ENCODE measurements at regions of chr17 and their contacts with region 1.

Region 1: GRCh38 chr17:32519228-32520103 is 32.7 kb downstream of the CDK5R1 start:
- DNase-seq: peak; percentile 48
- ATAC-seq: peak; percentile 14
- H3K4me3 Mint-ChIP-seq: peak overlapping the region; percentile 87
- H3K27ac Mint-ChIP-seq: peak overlapping the region; percentile 86
- H3K4me1 Mint-ChIP-seq: peaks cover 89% of the 10 kb centered on the region
- H3K27me3 Mint-ChIP-seq: no peaks in the 10 kb centered on the region
- CTCF ChIP-seq: no peak

Region 2: DNA sequence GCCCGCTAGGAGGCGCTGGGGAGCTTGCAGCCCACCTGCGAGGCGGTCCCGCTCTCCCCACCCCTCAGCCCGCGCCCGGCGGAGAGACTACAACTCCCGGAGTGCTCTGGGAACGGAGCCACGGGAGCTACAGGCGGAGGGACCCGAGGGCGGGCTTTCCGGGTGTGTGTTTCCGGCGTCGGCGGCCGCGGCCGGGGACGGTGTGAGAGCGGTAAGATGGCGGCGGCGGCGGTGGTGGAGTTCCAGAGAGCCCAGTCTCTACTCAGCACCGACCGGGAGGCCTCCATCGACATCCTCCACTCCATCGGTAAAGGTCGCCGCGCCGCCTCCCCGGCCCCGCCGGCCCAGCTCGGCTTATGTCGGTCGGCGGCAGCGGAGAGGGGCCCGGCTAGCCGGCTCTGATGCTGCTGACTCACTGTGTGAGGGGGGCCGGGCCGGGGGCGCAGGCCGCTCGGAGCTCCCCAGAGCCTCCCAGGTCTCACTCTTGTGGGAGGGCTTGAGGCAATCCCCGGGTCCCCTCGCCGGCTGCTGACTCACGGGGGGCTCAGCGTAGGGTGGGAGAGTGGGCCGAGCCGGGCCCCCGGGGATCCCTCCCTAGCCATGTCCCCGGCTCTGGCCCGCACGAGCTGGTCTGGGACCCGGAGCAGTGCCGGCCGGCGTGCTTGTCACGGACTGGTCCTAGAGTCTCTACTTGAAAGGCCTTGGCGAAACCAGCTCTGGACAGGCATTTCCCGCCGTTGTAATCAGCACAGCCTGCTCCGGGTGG is 75.0 kb before region 1 on chr17 and contains the start of gene PSMD11:
- CTCF ChIA-PET with region 1: interaction called, 5 read pairs
- POLR2A ChIA-PET with region 1: interaction called, 10 read pairs
- intact Hi-C with region 1: loop called (anchors 2 kb)
- DNase-seq: peak; percentile 99
- ATAC-seq: peak; percentile 97
- H3K4me3 Mint-ChIP-seq: peak within 1 kb of the TSS; percentile 89
- H3K27ac Mint-ChIP-seq: peak within 1 kb of the TSS; percentile 65
- H3K4me1 Mint-ChIP-seq: peaks cover 28% of the 10 kb centered on the region
- H3K27me3 Mint-ChIP-seq: no peaks in the 10 kb centered on the region
- CTCF ChIP-seq: no peak
- total RNA-seq, gene PSMD11: 115 and 117 TPM in 2 replicates

Region 3: DNA sequence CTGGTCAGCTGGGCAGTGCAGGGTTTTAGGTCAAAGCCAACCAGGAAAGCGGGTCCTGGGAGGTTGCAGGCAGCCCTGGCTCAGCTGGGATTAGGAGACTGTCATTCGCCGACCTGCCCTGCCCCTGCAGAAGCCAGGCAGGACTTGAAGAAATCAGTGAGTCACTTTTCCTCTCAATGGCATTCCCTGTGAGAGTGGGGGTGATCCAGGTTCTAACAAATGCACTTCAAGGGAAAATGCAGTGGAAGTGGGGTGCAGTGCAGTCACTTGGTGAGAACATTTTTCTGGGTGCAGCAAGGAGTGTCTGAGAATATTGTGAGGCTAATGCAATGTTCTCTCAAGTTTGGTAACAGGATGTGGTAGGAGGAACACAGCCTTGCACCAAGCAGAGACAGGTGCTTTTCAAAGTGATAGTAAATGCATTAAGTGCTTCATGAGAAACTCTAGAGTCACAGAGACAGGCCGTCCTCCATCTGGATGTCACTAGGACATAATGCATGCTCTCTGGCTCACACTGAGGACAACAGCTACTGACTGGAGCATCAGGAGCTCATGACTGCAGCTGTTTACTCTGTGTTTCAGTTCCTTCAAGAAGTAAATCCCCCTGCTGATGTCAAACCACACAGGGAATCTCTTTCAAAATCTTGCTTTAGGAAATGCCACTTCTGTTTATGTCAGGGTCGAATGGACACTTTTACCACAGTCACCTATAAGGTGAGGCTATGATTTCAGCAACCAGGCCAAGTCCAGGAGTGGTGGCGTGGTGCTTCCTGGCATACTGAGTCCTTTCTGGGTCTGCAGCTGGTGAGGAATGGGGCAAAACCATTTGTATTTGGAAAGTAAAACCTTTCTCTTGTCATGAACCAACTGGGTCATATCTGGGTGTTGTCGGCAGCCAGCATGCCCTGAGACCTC is 16.0 kb before region 1 on chr17:
- CTCF ChIA-PET with region 1: interaction called, 4 read pairs
- POLR2A ChIA-PET with region 1: interaction called, 23 read pairs
- intact Hi-C with region 1: loop called (anchors 1 kb)
- DNase-seq: no peak
- ATAC-seq: peak; percentile 89
- H3K4me3 Mint-ChIP-seq: peak overlapping the region; percentile 68
- H3K27ac Mint-ChIP-seq: peak overlapping the region; percentile 92
- H3K4me1 Mint-ChIP-seq: peaks cover 53% of the 10 kb centered on the region
- H3K27me3 Mint-ChIP-seq: no peaks in the 10 kb centered on the region
- CTCF ChIP-seq: no peak

Region 4: DNA sequence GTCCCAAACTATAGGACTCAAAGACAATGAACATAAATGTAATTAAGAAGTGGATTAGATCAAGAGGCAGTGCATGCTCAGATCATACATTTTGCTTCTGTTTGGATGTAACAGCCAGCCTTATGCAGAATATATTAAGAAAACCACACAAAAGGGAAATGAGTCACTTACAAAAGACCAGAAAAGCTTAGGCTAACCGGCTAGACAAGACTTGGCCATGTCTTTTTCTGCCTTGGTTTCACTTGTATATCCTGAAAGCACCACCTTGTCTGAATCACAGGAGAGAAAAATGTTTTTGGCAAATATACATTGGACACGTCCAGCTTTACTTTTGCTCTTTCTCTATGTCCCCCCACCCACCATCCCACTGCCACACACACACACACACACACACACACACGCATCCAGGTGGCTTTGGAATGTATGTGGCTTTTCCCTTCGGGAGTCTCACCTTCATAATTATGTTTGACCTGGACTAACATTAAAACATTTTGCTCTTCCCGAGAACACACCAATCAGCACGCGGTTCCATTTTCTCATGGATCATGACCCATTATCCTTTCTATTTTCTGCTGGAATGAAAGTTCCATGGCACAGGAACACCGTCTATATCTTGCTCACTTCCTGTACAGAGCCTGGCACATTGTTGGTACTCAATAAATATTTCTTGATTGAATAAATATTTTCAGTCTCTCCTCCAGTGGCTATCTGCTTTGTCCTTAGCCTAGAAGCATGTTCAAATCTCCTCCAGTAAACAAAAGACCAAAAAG is 31.9 kb after region 1 on chr17:
- CTCF ChIA-PET with region 1: interaction called, 3 read pairs
- POLR2A ChIA-PET with region 1: interaction called, 13 read pairs
- intact Hi-C with region 1: no loop called
- DNase-seq: no peak
- ATAC-seq: peak; percentile 76
- H3K4me3 Mint-ChIP-seq: no peak overlapping the region
- H3K27ac Mint-ChIP-seq: peak overlapping the region; percentile 6
- H3K4me1 Mint-ChIP-seq: peaks cover 36% of the 10 kb centered on the region
- H3K27me3 Mint-ChIP-seq: no peaks in the 10 kb centered on the region
- CTCF ChIP-seq: no peak

Region 5: GRCh38 chr17:32609085-32609484 is 89.6 kb after region 1 on chr17:
- CTCF ChIA-PET with region 1: interaction called, 5 read pairs
- POLR2A ChIA-PET with region 1: interaction called, 10 read pairs
- intact Hi-C with region 1: loop called (anchors 1 kb)
- DNase-seq: peak; percentile 52
- ATAC-seq: peak; percentile 100
- H3K4me3 Mint-ChIP-seq: no peak overlapping the region
- H3K27ac Mint-ChIP-seq: no peak overlapping the region
- H3K4me1 Mint-ChIP-seq: peaks cover 8% of the 10 kb centered on the region
- H3K27me3 Mint-ChIP-seq: no peaks in the 10 kb centered on the region
- CTCF ChIP-seq: no peak

Region 6: DNA sequence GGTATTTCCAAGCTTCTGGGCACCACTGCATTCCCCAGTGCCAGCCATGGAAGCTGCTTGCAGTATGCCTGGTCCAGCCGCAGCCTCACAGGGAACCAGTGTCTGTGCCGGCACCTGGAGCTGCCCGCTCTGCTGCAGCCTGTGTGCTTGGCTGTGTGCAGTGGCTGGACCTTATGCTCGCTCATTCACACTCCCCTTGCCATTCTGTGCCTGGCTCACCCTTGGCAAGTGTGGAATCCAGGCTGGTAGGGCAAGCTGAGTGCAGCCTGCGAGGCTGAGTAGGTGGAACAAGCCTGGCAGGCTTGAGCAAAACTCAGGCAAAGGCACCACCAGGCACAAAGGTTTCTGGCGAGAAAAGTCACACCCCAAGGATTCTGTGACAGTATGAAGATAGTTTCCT is 213.4 kb after region 1 on chr17:
- CTCF ChIA-PET with region 1: no interaction called
- POLR2A ChIA-PET with region 1: no interaction called
- intact Hi-C with region 1: no loop called
- DNase-seq: no peak
- ATAC-seq: no peak
- H3K4me3 Mint-ChIP-seq: no peak overlapping the region
- H3K27ac Mint-ChIP-seq: no peak overlapping the region
- H3K4me1 Mint-ChIP-seq: no peaks in the 10 kb centered on the region
- H3K27me3 Mint-ChIP-seq: no peaks in the 10 kb centered on the region
- CTCF ChIP-seq: no peak